K562 (cell line): ENCODE measurements at regions of chr9 and their contacts with region 1.

Region 1: GRCh38 chr9:12329623-12329985 is 363.6 kb upstream of the TYRP1 start:
- DNase-seq: no peak
- ATAC-seq: no peak
- H3K4me3 ChIP-seq: no peak overlapping the region
- H3K27ac ChIP-seq: no peak overlapping the region
- H3K4me1 ChIP-seq: no peaks in the 10 kb centered on the region
- H3K27me3 ChIP-seq: no peaks in the 10 kb centered on the region
- CTCF ChIP-seq: no peak
- EP300 ChIP-seq: no peak
- POLR2A ChIP-seq: no peak
- RAD21 ChIP-seq: no peak

Region 2: DNA sequence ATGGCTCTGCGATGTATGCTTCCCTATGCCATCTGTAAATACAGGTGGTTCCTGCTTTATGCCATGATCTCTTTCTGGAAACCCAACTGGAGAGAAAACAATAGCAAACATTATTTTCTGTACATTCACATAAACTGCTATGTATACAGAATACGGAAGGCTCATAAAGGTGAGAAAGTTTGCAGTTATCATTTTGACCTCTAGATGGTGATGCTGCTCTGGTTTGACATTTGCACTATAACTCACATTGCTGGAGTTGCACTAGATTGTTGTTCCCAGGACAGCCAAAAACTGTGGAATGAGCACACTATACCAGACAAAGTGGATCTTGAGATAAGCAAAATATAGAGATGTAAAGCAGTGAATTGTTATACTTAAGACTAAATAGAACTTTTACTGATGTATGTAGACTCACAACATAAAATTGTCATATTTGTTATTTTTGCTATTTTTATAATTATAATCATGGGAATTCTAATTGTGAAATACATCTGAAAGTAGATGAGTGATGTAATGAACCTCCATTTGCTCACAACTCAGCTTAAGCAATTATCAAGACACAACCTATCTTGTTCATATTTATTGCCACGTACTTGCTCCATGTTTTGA is 1963.3 kb before region 1 on chr9:
- CTCF ChIA-PET with region 1: no interaction called
- POLR2A ChIA-PET with region 1: no interaction called
- in situ Hi-C with region 1: no loop called
- intact Hi-C with region 1: loop called (anchors 5 kb)
- DNase-seq: peak in 2 of 4 experiments; percentile 2 to 8
- ATAC-seq: no peak
- H3K4me3 ChIP-seq: no peak overlapping the region
- H3K27ac ChIP-seq: no peak overlapping the region
- H3K4me1 ChIP-seq: no peaks in the 10 kb centered on the region
- H3K27me3 ChIP-seq: no peaks in the 10 kb centered on the region
- CTCF ChIP-seq: peak in 2 of 3 experiments; percentile 30 to 36; a peak in 3 of 6 replicates
- EP300 ChIP-seq: no peak
- POLR2A ChIP-seq: no peak
- RAD21 ChIP-seq: peak; percentile 31 to 41